Gastrocnemius medialis (tissue), 4 donors: ENCODE measurements at regions of chr22 and their contacts with region 1.

Region 1: DNA sequence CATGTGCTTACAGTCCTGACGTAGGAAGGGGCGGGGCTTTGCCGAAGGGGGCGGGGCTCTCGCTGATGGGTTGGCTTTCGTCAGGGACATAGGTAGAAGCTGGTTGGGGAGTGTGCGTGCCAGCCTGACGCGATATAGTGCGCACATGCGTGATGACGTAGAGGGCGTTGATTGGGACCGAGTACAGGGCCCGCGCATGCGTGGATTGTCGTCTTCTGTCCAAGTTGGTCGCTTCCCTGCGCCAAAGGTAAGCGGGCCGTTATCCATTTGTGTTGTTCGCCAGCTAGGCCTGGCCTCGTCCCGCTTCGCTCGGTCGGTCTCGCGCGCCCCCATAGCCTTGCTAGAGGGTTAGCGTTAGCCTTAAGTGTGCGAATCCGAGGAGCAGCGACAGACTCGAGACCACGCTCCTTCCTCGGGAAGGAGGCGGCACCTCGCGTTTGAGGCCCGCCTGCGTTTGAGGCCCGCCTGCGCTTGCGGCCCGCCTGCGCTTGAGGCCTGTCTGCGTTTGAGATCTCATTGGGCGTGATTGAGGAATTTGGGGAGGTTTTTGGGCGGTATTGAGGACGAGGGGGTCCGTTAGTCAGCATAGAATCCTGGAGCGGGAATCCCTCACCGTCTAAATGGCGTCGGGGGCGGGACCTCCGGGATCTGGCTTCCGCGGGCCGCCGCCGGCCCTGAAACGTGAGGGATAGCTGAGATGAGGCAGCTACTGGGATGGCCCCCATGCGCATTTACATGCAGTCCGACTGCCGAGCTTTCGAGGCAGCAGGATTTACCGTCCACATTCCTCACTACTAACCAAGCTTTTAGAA is at the start of gene XRCC6:
- DNase-seq: peak; percentile 100
- ATAC-seq: peak; percentile 96
- H3K4me3 ChIP-seq: peak within 1 kb of the TSS; percentile 76 to 99 (median 94)
- H3K27ac ChIP-seq: peak within 1 kb of the TSS; percentile 95 to 99 (median 97)
- H3K4me1 ChIP-seq: peaks cover 21 to 23% of the 10 kb centered on the region in 2 donors
- H3K27me3 ChIP-seq: no peaks in the 10 kb centered on the region
- CTCF ChIP-seq: no peak
- POLR2A ChIP-seq: peak; percentile 93 to 95
- total RNA-seq, gene XRCC6: 220 to 285 (median 278) TPM

Region 2: DNA sequence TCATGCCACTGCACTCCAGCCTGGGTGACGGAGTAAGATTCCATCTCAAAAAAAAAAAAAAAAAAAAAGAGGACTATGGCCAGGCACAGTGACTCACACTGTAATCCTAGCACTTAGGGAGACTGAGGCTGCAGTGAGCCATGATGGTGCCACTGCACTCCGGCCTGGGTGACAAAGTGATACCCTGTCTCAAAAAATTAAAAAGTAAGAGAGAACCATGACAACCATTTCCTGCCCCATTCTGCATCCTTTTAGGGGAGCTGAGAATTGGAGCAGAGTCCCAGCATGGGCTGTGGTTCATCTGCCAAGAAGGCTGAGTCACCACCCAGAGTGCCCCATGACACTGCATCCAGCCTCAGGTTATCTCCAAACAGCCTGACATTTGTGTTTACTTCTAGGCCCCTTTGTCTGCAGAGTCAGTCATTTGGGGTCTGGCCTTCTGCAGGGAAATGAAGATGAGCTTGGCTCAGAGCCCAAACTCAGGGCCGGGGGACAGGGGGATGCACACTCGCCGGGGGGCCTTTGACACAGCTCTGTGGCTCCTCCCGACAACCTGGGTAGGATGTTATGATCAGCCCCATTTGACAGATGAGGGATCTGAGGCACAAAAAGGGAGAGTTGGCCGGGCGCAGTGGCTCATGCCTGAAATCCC is 55.8 kb before region 1 on chr22:
- in situ Hi-C with region 1: no loop called
- intact Hi-C with region 1: no loop called
- DNase-seq: peak; percentile 15 to 34
- ATAC-seq: peak; percentile 62 to 77
- H3K4me3 ChIP-seq: no peak overlapping the region
- H3K27ac ChIP-seq: peak overlapping the region in 3 of 4 donors; percentile 22 to 50 (median 43)
- H3K4me1 ChIP-seq: peaks cover 0 to 6% of the 10 kb centered on the region in 2 donors
- H3K27me3 ChIP-seq: no peaks in the 10 kb centered on the region
- CTCF ChIP-seq: no peak
- POLR2A ChIP-seq: no peak

Region 3: DNA sequence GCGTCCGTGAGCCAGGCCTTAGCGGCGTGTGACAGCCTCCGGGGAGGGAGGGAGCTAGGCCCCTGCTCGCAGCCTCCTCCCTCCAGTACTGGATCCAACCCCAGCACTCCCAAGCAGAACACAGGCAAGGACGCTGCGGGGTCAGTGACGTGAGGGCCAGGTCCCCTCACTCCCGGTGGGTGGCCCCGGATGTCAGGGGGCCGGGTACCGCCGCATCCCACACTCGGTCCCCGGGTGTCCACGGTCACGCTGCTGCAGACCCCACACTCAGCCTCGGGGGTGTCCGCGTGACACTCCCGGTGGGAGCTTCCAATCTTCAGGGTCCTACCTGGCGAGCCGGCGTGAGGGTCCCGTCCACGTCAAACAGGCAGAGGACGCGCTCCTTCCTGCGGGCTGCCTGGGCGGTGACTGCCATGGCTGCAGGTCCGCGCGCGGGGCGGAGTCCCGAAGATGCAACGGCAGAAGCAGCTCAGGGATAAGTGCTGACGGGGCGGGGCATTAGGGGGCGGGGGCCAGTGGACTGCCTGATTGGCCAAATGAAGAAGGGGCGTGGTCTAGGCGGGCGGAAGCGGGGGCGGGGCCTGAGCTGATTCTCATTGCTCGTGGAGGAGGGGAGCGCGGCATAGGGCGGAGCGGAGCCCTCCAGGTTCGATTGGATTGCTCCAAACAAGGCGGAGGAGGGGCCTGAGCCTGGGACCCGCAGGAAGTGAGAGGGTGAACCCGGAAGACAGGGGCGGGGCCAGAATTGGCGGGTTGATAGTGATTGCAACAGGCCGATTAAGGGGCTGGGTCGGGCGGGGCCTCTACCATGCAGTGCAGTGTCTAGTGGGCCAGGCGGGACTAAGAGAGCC is 31.7 kb before region 1 on chr22 and contains the start of gene PMM1:
- in situ Hi-C with region 1: no loop called
- intact Hi-C with region 1: loop called (anchors 1 kb)
- DNase-seq: peak; percentile 100
- ATAC-seq: peak; percentile 98 to 99
- H3K4me3 ChIP-seq: peak within 1 kb of the TSS; percentile 76 to 95 (median 94)
- H3K27ac ChIP-seq: peak within 1 kb of the TSS; percentile 70 to 88 (median 82)
- H3K4me1 ChIP-seq: peaks cover 0 to 17% of the 10 kb centered on the region in 2 donors
- H3K27me3 ChIP-seq: no peaks in the 10 kb centered on the region
- CTCF ChIP-seq: no peak
- POLR2A ChIP-seq: peak; percentile 84 to 92
- total RNA-seq, gene PMM1: 11.6 to 23.3 (median 16.5) TPM

Region 4: GRCh38 chr22:41666661-41667258 is 45.5 kb after region 1 on chr22:
- in situ Hi-C with region 1: no loop called
- intact Hi-C with region 1: no loop called
- DNase-seq: peak; percentile 78 to 87
- ATAC-seq: peak; percentile 93 to 94
- H3K4me3 ChIP-seq: peak overlapping the region; percentile 41 to 72 (median 52)
- H3K27ac ChIP-seq: peak overlapping the region; percentile 71 to 91 (median 84)
- H3K4me1 ChIP-seq: peaks cover 0 to 9% of the 10 kb centered on the region in 2 donors
- H3K27me3 ChIP-seq: no peaks in the 10 kb centered on the region
- CTCF ChIP-seq: peak; percentile 93 to 99 (median 96)
- POLR2A ChIP-seq: peak; percentile 51 to 66

Region 5: GRCh38 chr22:41688365-41689211 is 67.3 kb after region 1 on chr22 and contains the start of gene SNU13:
- in situ Hi-C with region 1: no loop called
- intact Hi-C with region 1: no loop called
- DNase-seq: peak; percentile 87 to 90
- ATAC-seq: peak; percentile 98 to 99
- H3K4me3 ChIP-seq: peak within 1 kb of the TSS; percentile 74 to 93 (median 84)
- H3K27ac ChIP-seq: peak within 1 kb of the TSS; percentile 92 to 97 (median 94)
- H3K4me1 ChIP-seq: peaks cover 10 to 14% of the 10 kb centered on the region in 2 donors
- H3K27me3 ChIP-seq: no peaks in the 10 kb centered on the region
- CTCF ChIP-seq: peak in 1 of 5 experiments; percentile 16
- POLR2A ChIP-seq: peak; percentile 87 to 90
- total RNA-seq, gene SNU13: 177 to 202 (median 185) TPM